WTC11 (cell line): ENCODE measurements at regions of chr22 and their contacts with region 1.

Region 1: DNA sequence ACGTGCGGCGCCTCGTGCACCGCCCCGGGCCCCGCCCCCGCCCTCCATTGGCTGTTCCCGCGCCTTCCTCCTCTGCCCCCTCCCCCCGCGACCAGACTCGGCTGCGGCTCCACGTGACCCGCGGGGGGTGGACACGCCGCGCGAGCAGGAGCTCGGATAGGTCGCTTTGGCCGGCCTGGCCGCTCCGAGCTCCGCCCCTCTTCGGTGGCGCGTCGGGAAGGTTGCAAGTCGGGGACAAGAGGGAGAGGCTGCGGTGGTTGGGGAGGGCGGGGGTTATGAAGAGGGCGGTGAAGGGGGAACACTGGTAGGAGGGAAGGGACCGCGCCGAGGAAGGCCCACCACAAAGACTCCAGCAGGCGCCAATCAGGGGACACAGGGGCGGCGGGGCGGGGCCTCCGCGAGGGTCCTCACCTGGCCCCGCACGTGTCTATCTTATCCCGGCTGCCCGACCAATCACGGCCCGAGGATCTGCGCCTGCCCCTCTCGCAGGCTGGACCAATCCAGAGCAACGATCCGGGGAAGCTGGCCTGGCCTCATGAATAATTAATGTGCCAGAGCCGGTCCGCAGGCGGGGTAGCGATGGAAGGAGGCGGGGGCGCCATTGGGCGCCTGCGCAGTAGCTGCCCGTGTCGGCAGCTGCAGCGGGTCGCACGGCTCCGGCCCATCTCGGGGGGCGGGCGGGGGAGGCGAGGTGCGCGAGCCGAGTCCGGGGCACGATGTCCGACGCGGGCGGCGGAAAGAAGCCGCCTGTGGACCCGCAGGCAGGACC is at the start of gene TEF:
- DNase-seq: peak; percentile 99
- ATAC-seq: peak; percentile 90
- H3K4me3 Mint-ChIP-seq: peak within 1 kb of the TSS; percentile 78
- H3K27ac Mint-ChIP-seq: peak within 1 kb of the TSS; percentile 97
- H3K4me1 Mint-ChIP-seq: peaks cover 21% of the 10 kb centered on the region
- H3K27me3 Mint-ChIP-seq: peaks cover 4% of the 10 kb centered on the region
- CTCF ChIP-seq: no peak
- total RNA-seq, gene TEF: 9.8 to 12.0 TPM (median 10.2 TPM) in 3 replicates

Region 2: GRCh38 chr22:41360126-41360525 is 21.4 kb before region 1 on chr22:
- CTCF ChIA-PET with region 1: interaction called, 8 read pairs
- POLR2A ChIA-PET with region 1: interaction called, 13 read pairs
- DNase-seq: peak; percentile 71
- ATAC-seq: peak; percentile 93
- H3K4me3 Mint-ChIP-seq: no peak overlapping the region; the same call in 1 of the 2 replicates
- H3K27ac Mint-ChIP-seq: peak overlapping the region; percentile 75
- H3K4me1 Mint-ChIP-seq: peaks cover 18% of the 10 kb centered on the region
- H3K27me3 Mint-ChIP-seq: no peaks in the 10 kb centered on the region
- CTCF ChIP-seq: no peak

Region 3: GRCh38 chr22:41468381-41469217 is 87.1 kb after region 1 on chr22 and contains the starts of genes ACO2 and PHF5A:
- CTCF ChIA-PET with region 1: interaction called, 10 read pairs
- POLR2A ChIA-PET with region 1: interaction called, 12 read pairs
- DNase-seq: peak; percentile 98
- ATAC-seq: peak; percentile 94
- H3K4me3 Mint-ChIP-seq: peak within 1 kb of the TSS; percentile 96
- H3K27ac Mint-ChIP-seq: peak within 1 kb of the TSS; percentile 100
- H3K4me1 Mint-ChIP-seq: peaks cover 25% of the 10 kb centered on the region
- H3K27me3 Mint-ChIP-seq: no peaks in the 10 kb centered on the region; the same call in 1 of the 2 replicates
- CTCF ChIP-seq: no peak
- total RNA-seq, gene ACO2: 98.3 to 104 TPM (median 99.3 TPM) in 3 replicates
- total RNA-seq, gene PHF5A: 93.1 to 99.6 TPM (median 97.9 TPM) in 3 replicates

Region 4: DNA sequence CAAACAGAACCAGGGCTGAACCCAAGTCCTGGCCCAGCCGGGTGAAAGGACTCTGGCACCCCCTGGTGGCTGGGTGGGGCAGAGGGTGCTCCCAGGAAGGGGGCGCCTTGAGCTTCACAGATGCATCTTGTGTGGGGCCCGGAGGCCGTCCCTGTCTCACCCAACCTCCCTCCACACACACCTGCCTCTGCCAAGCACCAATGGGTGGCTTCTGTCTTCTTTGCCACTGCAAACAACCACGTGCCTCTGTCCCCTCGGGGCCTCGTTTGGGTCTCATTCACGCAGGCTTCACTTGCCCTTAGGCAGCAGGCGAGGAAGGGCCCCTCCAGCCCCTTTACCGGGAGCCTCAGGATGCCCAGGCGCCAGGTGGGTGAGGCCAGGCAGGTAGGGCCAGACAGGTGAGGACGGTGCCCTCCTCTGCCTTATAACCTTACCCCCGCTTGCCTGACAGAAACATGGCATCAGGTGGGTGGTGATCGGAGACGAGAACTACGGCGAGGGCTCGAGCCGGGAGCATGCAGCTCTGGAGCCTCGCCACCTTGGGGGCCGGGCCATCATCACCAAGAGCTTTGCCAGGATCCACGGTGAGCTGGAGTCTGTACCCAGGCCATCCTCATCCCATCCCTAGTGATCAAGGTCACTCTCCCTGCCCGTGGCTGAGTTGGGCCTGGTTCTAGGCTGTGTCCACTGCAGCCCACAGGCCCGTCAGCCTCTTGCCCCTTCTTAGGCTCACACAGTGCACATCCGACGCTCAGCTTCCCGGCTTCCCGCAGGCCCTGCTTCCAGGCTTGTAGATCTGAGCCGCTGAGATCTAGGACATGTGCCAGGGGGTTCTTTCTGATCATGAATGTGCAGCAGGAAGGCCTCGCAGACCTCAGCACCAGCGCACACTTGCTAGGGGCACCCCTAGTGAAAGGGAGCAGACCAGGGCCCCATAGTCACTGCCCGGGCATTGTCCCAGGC is 145.6 kb after region 1 on chr22:
- CTCF ChIA-PET with region 1: interaction called, 11 read pairs
- POLR2A ChIA-PET with region 1: no interaction called
- DNase-seq: peak; percentile 76
- ATAC-seq: peak; percentile 64
- H3K4me3 Mint-ChIP-seq: no peak overlapping the region
- H3K27ac Mint-ChIP-seq: no peak overlapping the region
- H3K4me1 Mint-ChIP-seq: no peaks in the 10 kb centered on the region
- H3K27me3 Mint-ChIP-seq: peaks cover 2% of the 10 kb centered on the region; the same call in 1 of the 2 replicates
- CTCF ChIP-seq: peak; percentile 84

Region 5: GRCh38 chr22:41589391-41590241 is 208.1 kb after region 1 on chr22 and contains the start of gene PMM1:
- CTCF ChIA-PET with region 1: interaction called, 3 read pairs
- POLR2A ChIA-PET with region 1: interaction called, 10 read pairs
- DNase-seq: peak; percentile 100
- ATAC-seq: peak; percentile 99
- H3K4me3 Mint-ChIP-seq: peak within 1 kb of the TSS; percentile 89
- H3K27ac Mint-ChIP-seq: peak within 1 kb of the TSS; percentile 76
- H3K4me1 Mint-ChIP-seq: peaks cover 6% of the 10 kb centered on the region
- H3K27me3 Mint-ChIP-seq: peaks cover 10% of the 10 kb centered on the region; the same call in 1 of the 2 replicates
- CTCF ChIP-seq: no peak
- total RNA-seq, gene PMM1: 14.8 to 15.7 TPM (median 15.0 TPM) in 3 replicates